ENCODE measurements at regions of chr3 and their contacts with region 1.

Region 1: DNA sequence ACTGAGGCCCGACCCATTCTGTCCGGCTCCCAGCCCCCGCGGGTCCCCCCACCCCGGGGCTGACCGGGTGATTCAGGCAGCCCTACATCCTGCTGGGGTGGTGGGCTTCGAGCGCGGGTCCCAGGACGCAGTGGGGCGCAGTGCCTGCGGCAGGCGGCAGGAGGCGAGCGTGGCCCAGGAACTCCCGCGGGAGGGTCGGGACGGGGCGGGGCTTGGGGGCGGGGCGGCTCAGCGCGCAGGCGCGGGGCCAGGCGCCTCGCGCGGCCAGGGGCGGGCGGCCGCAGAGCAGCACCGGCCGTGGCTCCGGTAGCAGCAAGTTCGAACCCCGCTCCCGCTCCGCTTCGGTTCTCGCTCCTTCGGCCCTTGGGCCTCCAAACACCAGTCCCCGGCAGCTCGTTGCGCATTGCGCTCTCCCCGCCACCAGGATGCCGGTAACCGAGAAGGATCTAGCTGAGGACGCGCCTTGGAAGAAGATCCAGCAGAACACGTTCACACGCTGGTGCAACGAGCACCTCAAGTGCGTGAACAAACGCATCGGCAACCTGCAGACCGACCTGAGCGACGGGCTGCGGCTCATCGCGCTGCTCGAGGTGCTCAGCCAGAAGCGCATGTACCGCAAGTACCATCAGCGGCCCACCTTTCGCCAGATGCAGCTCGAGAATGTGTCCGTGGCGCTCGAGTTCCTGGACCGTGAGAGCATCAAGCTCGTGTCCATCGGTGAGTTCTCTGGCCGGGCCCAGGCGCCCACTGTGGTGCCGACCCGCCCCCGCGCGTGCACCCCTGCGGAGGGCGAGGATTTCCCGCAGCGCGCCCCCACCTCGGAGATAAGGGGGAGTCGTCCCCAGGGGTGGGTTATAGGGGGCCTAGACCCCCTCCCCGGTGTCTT is at the start of gene FLNB:
- DNase-seq: peak; percentile 69
- H3K4me3 Mint-ChIP-seq: peak within 1 kb of the TSS; percentile 85
- H3K27ac Mint-ChIP-seq: peak within 1 kb of the TSS; percentile 91
- H3K4me1 Mint-ChIP-seq: peaks cover 42% of the 10 kb centered on the region
- H3K27me3 Mint-ChIP-seq: no peaks in the 10 kb centered on the region
- CTCF ChIP-seq: peak; percentile 71
- total RNA-seq, gene FLNB: 580 and 593 TPM in 2 replicates

Region 2: GRCh38 chr3:57961828-57962447 is 46.4 kb before region 1 on chr3:
- CTCF ChIA-PET with region 1: interaction called, 8 read pairs
- POLR2A ChIA-PET with region 1: interaction called, 6 read pairs
- intact Hi-C with region 1: loop called (anchors 2 kb)
- DNase-seq: peak; percentile 79
- H3K4me3 Mint-ChIP-seq: no peak overlapping the region
- H3K27ac Mint-ChIP-seq: no peak overlapping the region
- H3K4me1 Mint-ChIP-seq: peaks cover 14% of the 10 kb centered on the region
- H3K27me3 Mint-ChIP-seq: no peaks in the 10 kb centered on the region
- CTCF ChIP-seq: peak; percentile 70

Region 3: DNA sequence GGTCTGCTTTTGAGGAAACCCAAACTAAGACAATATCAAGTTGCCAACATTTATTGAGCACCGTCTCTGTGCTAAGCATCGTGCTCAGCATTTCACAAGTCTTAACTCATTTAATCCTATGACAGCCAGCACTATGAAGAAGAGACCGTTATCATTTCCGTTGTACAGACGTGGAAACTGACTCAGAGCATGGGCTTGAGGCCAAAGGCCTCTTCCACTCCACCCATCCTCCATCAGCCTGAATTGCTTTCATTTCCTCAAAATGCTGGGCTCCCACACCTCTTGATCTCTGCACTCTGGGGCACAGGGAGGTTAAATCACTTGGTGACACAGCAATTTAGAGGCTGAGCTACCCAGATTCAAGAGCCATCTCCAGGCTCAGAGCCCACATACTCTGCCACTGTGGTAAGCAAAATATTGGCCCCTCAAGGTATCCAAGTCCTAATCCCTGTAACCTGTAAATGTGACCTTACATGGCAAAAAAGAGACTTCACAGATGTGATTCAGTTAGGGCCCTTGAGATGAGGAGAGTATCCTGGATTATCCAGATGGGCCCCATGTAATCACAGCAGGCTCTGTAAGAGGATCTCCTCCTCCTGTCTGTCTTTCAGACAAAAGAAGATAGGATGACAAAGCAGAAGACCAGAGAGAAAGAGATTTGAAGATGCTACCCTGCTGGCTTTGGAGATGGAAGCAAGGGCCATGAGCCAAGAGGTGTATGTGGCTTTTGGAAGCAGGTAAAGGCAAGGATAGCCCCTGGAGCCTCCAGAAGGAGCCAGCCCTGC is 24.5 kb before region 1 on chr3:
- CTCF ChIA-PET with region 1: interaction called, 4 read pairs
- POLR2A ChIA-PET with region 1: interaction called, 11 read pairs
- intact Hi-C with region 1: loop called (anchors 1 kb)
- DNase-seq: peak; percentile 88
- H3K4me3 Mint-ChIP-seq: no peak overlapping the region
- H3K27ac Mint-ChIP-seq: peak overlapping the region; percentile 68
- H3K4me1 Mint-ChIP-seq: peaks cover 26% of the 10 kb centered on the region
- H3K27me3 Mint-ChIP-seq: no peaks in the 10 kb centered on the region
- CTCF ChIP-seq: no peak

Region 4: GRCh38 chr3:58041654-58042324 is 33.4 kb after region 1 on chr3:
- CTCF ChIA-PET with region 1: interaction called, 6 read pairs
- POLR2A ChIA-PET with region 1: interaction called, 14 read pairs
- intact Hi-C with region 1: no loop called
- DNase-seq: no peak
- H3K4me3 Mint-ChIP-seq: no peak overlapping the region
- H3K27ac Mint-ChIP-seq: peak overlapping the region; percentile 82
- H3K4me1 Mint-ChIP-seq: peaks cover 54% of the 10 kb centered on the region
- H3K27me3 Mint-ChIP-seq: no peaks in the 10 kb centered on the region
- CTCF ChIP-seq: no peak

Region 5: DNA sequence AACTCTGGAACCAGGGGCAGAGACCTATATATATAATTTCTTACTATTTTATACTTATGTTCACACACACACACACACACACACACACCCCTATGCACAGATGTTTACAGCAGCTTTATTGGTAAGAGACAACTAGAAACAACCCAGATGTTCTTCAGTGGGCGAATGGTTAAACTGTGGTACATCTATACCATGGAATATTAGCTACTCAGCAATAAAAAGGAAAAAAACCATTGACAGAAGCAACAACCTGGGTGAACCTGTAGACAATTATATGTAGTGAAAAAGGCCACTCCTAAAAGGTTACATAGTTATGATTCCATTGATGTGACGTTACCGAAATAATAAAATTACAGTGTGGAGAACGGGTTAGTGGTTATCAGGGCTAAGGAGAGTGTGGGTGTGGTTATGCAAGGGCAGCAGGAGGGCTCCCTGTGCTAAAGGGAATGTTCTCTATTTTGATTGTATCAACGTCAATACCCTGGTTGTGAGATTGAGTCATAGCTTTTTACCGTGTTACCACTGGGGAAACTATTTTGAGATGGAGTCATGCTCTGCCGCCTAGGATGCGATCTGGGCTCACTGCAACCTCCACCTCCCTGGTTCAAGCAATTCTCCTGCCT is 85.3 kb after region 1 on chr3:
- CTCF ChIA-PET with region 1: interaction called, 26 read pairs
- POLR2A ChIA-PET with region 1: interaction called, 16 read pairs
- intact Hi-C with region 1: loop called (anchors 1 kb)
- DNase-seq: peak; percentile 89
- H3K4me3 Mint-ChIP-seq: no peak overlapping the region
- H3K27ac Mint-ChIP-seq: peak overlapping the region; percentile 72
- H3K4me1 Mint-ChIP-seq: peaks cover 21% of the 10 kb centered on the region
- H3K27me3 Mint-ChIP-seq: no peaks in the 10 kb centered on the region
- CTCF ChIP-seq: no peak

Region 6: GRCh38 chr3:58177747-58178527 is 169.6 kb after region 1 on chr3:
- CTCF ChIA-PET with region 1: interaction called, 3 read pairs
- POLR2A ChIA-PET with region 1: no interaction called
- intact Hi-C with region 1: loop called (anchors 5 kb)
- DNase-seq: peak; percentile 78
- H3K4me3 Mint-ChIP-seq: peak overlapping the region; percentile 51
- H3K27ac Mint-ChIP-seq: no peak overlapping the region
- H3K4me1 Mint-ChIP-seq: peaks cover 24% of the 10 kb centered on the region
- H3K27me3 Mint-ChIP-seq: no peaks in the 10 kb centered on the region
- CTCF ChIP-seq: peak; percentile 82

Region 7: GRCh38 chr3:59163953-59164352 is 1155.6 kb after region 1 on chr3:
- CTCF ChIA-PET with region 1: no interaction called
- POLR2A ChIA-PET with region 1: no interaction called
- intact Hi-C with region 1: no loop called
- DNase-seq: no peak
- H3K4me3 Mint-ChIP-seq: no peak overlapping the region
- H3K27ac Mint-ChIP-seq: no peak overlapping the region
- H3K4me1 Mint-ChIP-seq: no peaks in the 10 kb centered on the region
- H3K27me3 Mint-ChIP-seq: no peaks in the 10 kb centered on the region
- CTCF ChIP-seq: no peak

Measured in MCF 10A (cell line).